ENCODE measurements at regions of chr22 and their contacts with region 1.

Region 1: GRCh38 chr22:37643225-37643847 is 3.9 kb downstream of the SH3BP1 start:
- DNase-seq: peak; percentile 38 to 77
- ATAC-seq: peak; percentile 79 to 88
- H3K4me3 ChIP-seq: no peak overlapping the region
- H3K27ac ChIP-seq: no peak overlapping the region
- H3K4me1 ChIP-seq: peaks cover 0 to 9% of the 10 kb centered on the region in 2 donors
- H3K27me3 ChIP-seq: peaks cover 7 to 14% (median 12%) of the 10 kb centered on the region in 3 donors
- CTCF ChIP-seq: peak; percentile 77 to 96 (median 94)
- POLR2A ChIP-seq: no peak

Region 2: DNA sequence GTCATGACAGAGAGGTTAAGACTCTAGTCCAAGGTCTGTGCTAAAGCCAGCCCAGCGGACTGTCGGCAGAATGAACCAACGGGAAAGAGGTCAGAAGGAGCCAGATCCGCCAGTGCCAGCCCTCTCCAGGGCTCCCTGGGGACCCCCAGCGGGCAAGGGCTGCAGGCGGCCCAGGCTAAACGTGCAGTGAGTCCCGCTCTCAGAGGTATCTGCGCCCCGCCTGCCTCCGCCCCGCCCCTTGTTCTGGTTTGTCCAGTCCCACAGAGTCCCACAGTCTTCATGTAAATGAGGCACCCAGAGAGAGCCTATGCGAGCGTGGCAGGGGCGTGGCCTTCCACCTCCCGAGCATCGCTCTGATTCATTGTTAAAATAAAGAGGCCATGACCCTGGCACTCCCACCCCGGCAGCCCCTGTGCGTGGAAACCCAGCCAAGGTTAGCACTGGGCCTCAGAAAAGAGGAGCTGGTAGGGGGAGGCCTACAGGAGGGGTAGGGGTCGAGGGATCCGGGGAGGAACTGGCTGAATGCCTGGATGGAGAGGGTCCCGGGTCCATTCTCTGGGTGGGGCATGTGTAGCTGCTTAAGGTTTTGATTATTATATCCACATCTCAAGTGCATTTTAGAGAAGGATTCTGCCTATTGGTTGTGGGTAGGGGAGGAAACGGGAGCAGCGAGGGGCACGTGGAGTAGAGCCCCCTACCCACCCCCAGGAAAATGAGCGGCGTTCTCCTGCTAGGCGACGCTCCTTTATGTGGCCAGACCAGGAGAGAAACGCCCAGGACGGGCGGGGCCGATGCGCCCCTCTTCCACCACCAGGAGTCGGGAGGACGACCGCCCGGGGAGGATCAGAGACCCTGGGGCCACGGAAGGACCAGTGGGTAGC is 53.6 kb after region 1 on chr22 and contains the start of gene TRIOBP:
- in situ Hi-C with region 1: no loop called
- intact Hi-C with region 1: no loop called
- DNase-seq: peak; percentile 86 to 89
- ATAC-seq: peak; percentile 96 to 97
- H3K4me3 ChIP-seq: peak within 1 kb of the TSS; percentile 21 to 43 (median 34)
- H3K27ac ChIP-seq: no peak within 1 kb of the TSS
- H3K4me1 ChIP-seq: peaks cover 7 to 11% of the 10 kb centered on the region in 2 donors
- H3K27me3 ChIP-seq: no peaks in the 10 kb centered on the region
- CTCF ChIP-seq: peak; percentile 21 to 59 (median 46)
- POLR2A ChIP-seq: no peak
- total RNA-seq, gene TRIOBP: 21.7 to 38.2 (median 30.3) TPM

Region 3: GRCh38 chr22:37708580-37709444 is 65.5 kb after region 1 on chr22:
- in situ Hi-C with region 1: no loop called
- intact Hi-C with region 1: no loop called
- DNase-seq: no peak
- ATAC-seq: no peak
- H3K4me3 ChIP-seq: no peak overlapping the region
- H3K27ac ChIP-seq: no peak overlapping the region
- H3K4me1 ChIP-seq: no peaks in the 10 kb centered on the region
- H3K27me3 ChIP-seq: no peaks in the 10 kb centered on the region
- CTCF ChIP-seq: no peak
- POLR2A ChIP-seq: no peak

Region 4: DNA sequence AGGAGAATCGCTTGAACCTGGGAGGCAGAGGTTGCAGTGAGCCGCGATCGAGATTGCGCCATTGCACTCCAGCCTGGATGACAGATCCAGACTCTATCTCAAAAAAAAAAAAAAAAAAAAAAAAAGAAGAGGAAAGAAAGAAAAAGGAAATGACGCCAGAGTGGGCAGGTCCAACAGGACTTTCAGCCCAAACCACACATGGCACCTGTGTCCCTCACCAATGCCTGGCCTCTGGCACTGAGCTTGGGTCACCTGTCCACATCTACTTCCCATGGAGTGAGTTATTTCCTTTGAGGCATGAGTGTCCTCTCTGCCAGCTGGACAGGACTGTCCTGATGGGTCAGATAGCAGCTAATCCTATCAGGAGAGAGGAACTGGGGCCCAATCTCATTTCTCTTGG is 149.2 kb after region 1 on chr22:
- in situ Hi-C with region 1: loop called in 1 of 4 experiments (anchors 25 kb)
- intact Hi-C with region 1: loop called (anchors 2 kb)
- DNase-seq: no peak
- ATAC-seq: no peak
- H3K4me3 ChIP-seq: no peak overlapping the region
- H3K27ac ChIP-seq: no peak overlapping the region
- H3K4me1 ChIP-seq: no peaks in the 10 kb centered on the region
- H3K27me3 ChIP-seq: no peaks in the 10 kb centered on the region
- CTCF ChIP-seq: no peak
- POLR2A ChIP-seq: no peak

Measured in gastrocnemius medialis (tissue), 4 donors.